Right ventricle myocardium inferior (tissue), 1 donor: ENCODE measurements at regions of chr16 and their contacts with region 1.

Region 1: DNA sequence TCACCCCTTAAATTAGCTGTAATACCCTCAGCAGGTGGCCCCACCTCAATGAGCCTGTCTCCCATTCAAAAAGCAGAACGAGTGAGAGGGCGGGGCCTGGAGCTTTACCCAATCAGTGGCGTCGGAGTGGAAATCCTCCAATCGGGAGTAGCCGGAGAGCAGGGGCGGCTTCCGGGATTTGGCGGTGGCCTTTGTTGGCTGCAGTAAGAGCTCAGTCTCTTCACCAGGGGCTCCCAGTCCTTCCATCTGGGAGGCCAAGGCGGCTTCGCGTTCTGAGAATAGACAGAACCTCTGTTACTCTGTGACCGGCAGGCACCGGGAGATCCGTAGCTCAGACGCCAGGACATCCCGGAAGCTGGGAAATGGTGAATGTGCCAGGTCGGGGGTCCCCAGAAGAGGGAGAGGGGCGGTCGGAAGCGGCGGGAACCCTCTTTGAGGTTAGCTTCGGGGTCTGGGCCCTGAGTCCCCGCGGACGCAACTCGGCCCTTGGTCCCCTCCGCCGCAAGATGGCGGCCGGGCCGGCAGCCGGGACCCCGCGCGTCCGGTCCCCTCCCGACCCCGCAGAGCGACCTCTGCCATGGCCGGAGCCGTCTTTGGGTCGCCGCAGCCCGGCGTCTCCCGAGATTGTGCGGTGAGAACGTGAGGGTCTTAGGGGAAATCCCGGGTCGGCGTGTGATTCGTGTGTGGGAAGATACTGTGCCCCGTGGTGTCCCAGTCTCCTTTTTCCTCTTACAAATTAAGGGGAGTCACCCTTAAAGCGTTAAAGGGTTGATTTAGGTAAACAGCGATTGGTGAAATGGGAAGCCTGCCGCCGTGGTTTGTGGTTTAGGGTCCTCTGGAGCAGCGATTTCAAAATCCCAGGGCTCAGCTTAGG is 160.3 kb upstream of the ZNF267 start:
- DNase-seq: peak; percentile 93
- ATAC-seq: peak; percentile 96

Region 2: DNA sequence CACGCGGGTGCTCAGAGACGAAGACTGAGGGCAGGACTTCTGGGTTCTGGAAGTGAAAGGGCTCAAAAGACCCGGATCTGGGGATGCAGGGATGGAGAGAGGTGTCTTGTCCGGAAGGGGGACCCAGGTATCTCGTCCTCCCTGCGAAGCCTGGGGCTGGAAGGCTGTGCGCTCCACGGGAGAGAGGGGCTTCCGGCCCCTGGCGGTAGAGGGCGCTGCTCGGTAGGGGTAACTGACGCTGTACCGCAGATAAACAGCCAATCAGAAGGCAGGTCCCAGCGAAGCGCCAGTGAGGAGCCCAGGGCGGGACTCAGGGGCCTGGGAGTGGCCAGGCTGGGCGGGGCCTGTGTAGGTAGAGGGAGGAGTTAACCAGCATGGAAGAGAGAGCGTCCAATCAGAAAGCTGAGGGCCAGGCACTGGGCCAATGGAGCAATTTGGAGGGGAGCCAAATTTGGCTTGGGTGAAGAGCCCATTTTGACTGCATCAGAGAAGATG is 240.6 kb before region 1 on chr16:
- intact Hi-C with region 1: loop called (anchors 10 kb)
- DNase-seq: peak; percentile 88
- ATAC-seq: peak; percentile 87